ENCODE measurements at regions of chr17 and their contacts with region 1.

Region 1: DNA sequence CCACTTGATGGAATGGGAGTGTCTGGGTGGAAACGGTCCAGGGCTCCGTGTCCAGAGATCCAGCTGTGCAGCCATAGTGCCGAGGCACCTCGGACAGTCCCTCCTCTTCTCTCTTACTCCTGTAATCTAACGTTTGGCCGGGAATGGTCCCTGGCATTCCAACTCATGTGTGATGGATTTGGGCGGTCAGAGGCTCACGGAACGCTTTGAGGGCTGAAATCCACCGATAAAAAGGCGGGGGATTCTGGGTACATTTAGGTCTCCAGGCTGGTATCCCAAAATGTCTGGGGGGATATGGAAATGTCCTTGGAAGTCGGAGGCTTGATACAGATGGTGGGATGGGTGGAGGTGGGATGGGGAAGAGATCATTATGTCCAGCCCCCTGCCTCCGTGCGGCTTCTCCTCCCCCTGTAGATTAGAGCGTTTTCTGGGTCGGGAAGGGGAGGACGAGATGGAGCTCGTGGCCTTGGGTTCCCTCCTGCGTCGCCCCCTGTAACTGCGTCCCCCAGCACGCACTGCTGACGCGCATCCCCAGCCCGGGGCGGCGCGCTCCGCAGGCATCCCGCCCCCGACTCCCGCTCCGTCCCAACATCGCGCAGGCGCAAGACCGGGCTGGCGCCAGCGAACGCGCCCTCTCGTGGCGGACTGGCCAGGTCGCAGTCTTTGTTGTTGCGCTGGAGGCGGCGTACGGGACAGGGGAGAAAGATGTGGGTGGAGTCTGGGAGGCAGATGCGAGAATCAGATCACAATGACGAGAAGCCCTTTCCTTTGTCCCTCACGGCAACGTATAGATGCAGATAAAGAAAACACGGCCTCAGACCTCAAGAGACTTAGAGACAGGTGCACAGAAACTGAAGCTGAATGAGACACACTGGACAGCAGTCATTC is 4.5 kb upstream of the SGCA start:
- DNase-seq: peak; percentile 93 to 96 (median 95)
- H3K4me3 ChIP-seq: peak overlapping the region; percentile 16 to 87 (median 64)
- H3K27ac ChIP-seq: peak overlapping the region in 1 of 2 experiments; percentile 10
- H3K4me1 ChIP-seq: peaks cover 9 to 32% (median 26%) of the 10 kb centered on the region in 4 experiments
- H3K27me3 ChIP-seq: no peaks in the 10 kb centered on the region

Region 2: GRCh38 chr17:50094753-50095619 is 66.3 kb before region 1 on chr17 and contains the start of gene PDK2:
- CTCF ChIA-PET with region 1: interaction called, 30 read pairs
- POLR2A ChIA-PET with region 1: no interaction called
- DNase-seq: peak; percentile 97 to 99 (median 98)
- H3K4me3 ChIP-seq: peak within 1 kb of the TSS; percentile 77 to 97 (median 84)
- H3K27ac ChIP-seq: peak within 1 kb of the TSS; percentile 61 to 85
- H3K4me1 ChIP-seq: peaks cover 0 to 24% (median 19%) of the 10 kb centered on the region in 4 experiments
- H3K27me3 ChIP-seq: no peaks in the 10 kb centered on the region

Region 3: DNA sequence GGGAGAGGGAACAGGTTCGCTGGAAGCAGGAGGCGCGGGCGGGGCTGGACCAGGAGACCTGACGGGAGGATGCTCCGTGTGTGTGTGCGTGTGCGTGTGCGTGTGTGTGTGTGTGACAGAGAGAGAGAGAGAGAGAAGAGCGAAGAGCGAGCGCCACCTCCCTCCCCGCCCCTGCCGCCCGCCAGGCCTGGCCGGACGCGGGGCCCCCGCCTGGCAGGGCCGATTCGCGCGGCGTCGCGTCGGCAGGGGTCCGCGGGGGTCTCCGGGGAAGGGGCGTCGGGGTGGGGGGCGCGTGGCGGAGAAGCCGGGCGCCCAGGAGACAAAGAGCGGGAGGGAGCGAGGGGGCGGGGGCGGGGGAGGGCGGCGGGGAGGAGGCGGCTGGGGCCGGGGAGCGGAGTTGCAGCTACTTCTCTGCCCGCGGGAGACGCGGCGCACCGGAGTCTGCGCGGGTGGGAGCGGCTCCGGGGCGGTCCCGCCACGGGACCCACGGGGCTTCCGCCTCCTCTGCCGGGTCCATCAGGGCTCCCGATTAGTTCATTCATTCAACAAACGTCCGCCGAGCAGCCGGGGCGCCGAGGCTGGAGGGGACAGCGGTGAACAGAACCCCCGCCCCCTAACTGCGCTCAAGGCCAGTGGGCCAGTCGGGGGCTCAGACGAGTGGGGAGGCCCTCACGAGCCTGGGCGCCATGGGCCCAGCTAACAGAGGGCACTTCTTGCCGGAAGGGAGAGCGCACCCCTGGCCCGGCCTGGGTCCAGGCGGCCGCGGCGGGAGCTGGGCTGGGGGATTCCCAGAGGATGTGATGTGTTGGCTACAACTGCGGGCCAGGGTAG is 31.3 kb before region 1 on chr17 and contains the start of gene SAMD14:
- CTCF ChIA-PET with region 1: interaction called, 25 read pairs
- POLR2A ChIA-PET with region 1: interaction called, 3 read pairs
- DNase-seq: peak in 2 of 3 donors; percentile 77 to 78
- H3K4me3 ChIP-seq: peak within 1 kb of the TSS in 6 of 7 experiments; percentile 40 to 73 (median 56)
- H3K27ac ChIP-seq: no peak within 1 kb of the TSS
- H3K4me1 ChIP-seq: peaks cover 3 to 37% (median 36%) of the 10 kb centered on the region in 4 experiments
- H3K27me3 ChIP-seq: peaks cover 0 to 21% (median 8%) of the 10 kb centered on the region in 5 experiments

Region 4: DNA sequence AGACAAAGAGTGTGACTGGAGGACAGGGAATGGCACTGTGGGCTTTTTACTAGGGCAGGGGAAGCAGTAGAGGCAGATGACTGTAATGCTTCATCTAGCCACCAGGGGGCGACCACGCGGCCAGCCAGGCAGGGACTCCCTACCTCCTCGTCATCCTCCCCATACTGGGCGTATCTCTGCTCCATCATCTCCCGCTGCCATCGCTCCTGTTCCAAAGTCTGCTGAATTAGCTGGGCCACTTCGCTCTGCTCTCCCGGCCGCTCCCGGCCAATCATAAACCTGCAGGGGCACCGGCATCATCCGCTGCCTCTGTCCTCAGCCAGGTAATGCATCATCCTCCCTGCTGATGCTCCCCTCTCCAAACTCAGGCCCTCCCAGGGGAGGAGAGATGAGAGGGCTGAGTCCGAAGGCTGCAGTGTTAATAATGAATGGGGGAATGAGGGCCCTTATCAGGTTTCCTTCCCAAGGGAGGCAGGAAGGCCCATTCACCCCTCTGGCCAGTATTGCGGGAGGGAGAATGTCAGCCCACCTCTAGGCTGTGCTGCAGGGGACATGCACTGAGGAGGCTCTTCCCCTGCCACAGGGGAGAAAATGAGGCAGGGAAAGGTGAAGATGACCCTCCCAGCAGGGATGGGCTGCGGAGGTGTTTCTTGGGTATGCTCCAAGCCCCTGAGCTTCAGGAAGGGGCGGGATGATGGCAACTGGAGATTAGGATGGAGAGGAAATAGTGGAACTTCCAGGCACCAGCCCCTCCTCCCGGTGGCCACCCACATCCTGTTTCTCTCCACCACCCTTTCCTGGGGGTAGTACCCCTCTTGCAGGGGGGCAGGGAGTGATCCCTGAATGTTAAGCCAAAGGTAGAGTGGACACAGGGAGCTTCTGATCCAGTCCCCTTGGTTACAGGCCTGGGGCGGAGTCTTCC is 21.1 kb before region 1 on chr17:
- CTCF ChIA-PET with region 1: interaction called, 68 read pairs
- POLR2A ChIA-PET with region 1: no interaction called
- DNase-seq: peak; percentile 68 to 80 (median 79)
- H3K4me3 ChIP-seq: peak overlapping the region in 5 of 7 experiments; percentile 14 to 64 (median 35)
- H3K27ac ChIP-seq: no peak overlapping the region
- H3K4me1 ChIP-seq: peaks cover 3 to 51% (median 47%) of the 10 kb centered on the region in 4 experiments
- H3K27me3 ChIP-seq: no peaks in the 10 kb centered on the region

Region 5: GRCh38 chr17:50177983-50178834 is 16.9 kb after region 1 on chr17:
- CTCF ChIA-PET with region 1: interaction called, 22 read pairs
- POLR2A ChIA-PET with region 1: no interaction called
- DNase-seq: peak; percentile 74 to 86 (median 81)
- H3K4me3 ChIP-seq: peak overlapping the region in 4 of 7 experiments; percentile 23 to 66 (median 50)
- H3K27ac ChIP-seq: no peak overlapping the region
- H3K4me1 ChIP-seq: peaks cover 0 to 13% (median 10%) of the 10 kb centered on the region in 4 experiments
- H3K27me3 ChIP-seq: no peaks in the 10 kb centered on the region